ENCODE measurements at regions of chr2 and their contacts with region 1.

Region 1: DNA sequence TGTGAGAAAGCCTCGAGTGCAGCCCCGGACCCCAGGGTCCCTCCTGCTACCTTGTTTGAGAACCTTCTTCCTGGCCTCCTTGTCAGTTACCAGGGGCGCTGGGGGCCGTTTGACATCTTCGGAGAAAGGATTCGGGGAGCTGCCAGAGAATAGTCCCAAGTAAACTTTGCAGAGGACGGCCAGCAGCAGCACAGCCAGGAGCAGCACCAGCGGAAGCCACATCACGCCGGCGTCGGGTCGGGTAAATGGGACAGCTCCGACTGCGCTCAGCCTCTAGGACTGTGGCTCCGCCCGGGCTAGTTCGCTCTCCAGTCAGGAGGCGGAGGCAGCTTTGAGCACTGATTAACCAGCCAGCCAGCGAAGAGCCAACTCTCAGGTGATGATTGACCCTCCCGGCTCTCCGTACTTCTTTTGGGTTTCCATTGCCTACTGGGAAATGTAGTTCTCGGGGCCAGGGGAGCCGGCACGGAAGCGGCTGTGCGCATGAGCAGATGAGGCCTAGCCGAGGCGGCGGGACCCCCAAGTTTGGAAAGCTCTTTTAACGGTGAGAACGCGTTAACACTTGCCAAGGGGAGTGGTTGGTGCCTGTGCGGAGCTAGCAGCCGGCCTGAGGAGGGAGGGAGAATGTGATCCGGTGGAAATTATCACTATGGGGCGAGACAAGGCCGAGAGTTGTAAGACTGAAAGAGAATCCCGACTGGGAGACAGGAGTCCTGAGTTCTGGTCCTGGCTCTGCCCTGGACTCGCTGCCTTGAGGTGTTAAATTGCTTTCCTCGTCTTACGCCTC is at the starts of genes ELMOD3 and RETSAT:
- DNase-seq: peak; percentile 92 to 96
- H3K4me3 ChIP-seq: peak within 1 kb of the TSS; percentile 75 to 96 (median 90)
- H3K27ac ChIP-seq: no peak within 1 kb of the TSS
- H3K4me1 ChIP-seq: peaks cover 0 to 3% (median 1%) of the 10 kb centered on the region in 4 experiments; a peak in 2 of 7 replicates
- H3K27me3 ChIP-seq: no peaks in the 10 kb centered on the region
- CTCF ChIP-seq: no peak
- EP300 ChIP-seq: no peak
- POLR2A ChIP-seq: peak in 1 of 2 experiments; percentile 93; a peak in 2 of 3 replicates
- RAD21 ChIP-seq: no peak
- total RNA-seq, gene ELMOD3: 6.9 and 10.2 TPM in 2 replicates
- total RNA-seq, gene RETSAT: 13.6 and 15.8 TPM in 2 replicates

Region 2: GRCh38 chr2:85327822-85328617 is 26.5 kb before region 1 on chr2 and contains the start of gene TGOLN2:
- CTCF ChIA-PET with region 1: interaction called, 5 read pairs
- POLR2A ChIA-PET with region 1: interaction called, 11 read pairs
- DNase-seq: peak; percentile 58 to 94
- H3K4me3 ChIP-seq: peak within 1 kb of the TSS; percentile 61 to 96 (median 84)
- H3K27ac ChIP-seq: peak within 1 kb of the TSS; percentile 99
- H3K4me1 ChIP-seq: peaks cover 0 to 13% (median 7%) of the 10 kb centered on the region in 4 experiments; a peak in 6 of 7 replicates
- H3K27me3 ChIP-seq: no peaks in the 10 kb centered on the region; a peak in 1 of 7 replicates
- CTCF ChIP-seq: peak in 1 of 3 experiments; percentile 8; a peak in 2 of 4 replicates
- EP300 ChIP-seq: no peak
- POLR2A ChIP-seq: peak; percentile 99 to 100
- RAD21 ChIP-seq: no peak; a peak in 1 of 4 replicates
- total RNA-seq, gene TGOLN2: 36.3 and 38.9 TPM in 2 replicates

Region 3: GRCh38 chr2:85340034-85340892 is 14.2 kb before region 1 on chr2:
- CTCF ChIA-PET with region 1: interaction called, 4 read pairs
- POLR2A ChIA-PET with region 1: interaction called, 23 read pairs
- DNase-seq: no peak
- H3K4me3 ChIP-seq: no peak overlapping the region
- H3K27ac ChIP-seq: no peak overlapping the region
- H3K4me1 ChIP-seq: peaks cover 0 to 7% (median 1%) of the 10 kb centered on the region in 4 experiments; a peak in 3 of 7 replicates
- H3K27me3 ChIP-seq: no peaks in the 10 kb centered on the region
- CTCF ChIP-seq: no peak
- EP300 ChIP-seq: no peak
- POLR2A ChIP-seq: no peak
- RAD21 ChIP-seq: no peak

Region 4: DNA sequence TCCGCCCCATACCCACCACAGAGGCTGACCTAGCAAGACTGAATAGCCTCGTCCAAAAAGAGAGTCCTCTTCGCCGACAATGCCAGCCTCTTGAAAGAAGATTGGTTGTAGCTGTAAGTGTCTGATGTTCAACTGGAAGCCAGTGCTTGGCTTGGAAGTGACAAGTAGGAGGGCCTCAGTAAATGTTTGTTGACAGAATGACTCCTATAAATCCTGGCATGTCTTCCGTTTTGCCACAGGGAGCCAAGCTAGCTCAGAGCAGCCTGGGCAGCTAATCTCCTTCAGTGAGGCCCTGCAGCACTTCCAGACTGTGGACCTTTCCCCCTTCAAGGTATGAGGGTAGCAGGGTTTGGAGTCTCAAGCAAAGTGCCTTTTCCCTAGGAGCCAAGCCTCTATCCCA is 15.0 kb after region 1 on chr2:
- CTCF ChIA-PET with region 1: interaction called, 11 read pairs
- POLR2A ChIA-PET with region 1: interaction called, 12 read pairs
- DNase-seq: no peak
- H3K4me3 ChIP-seq: no peak overlapping the region
- H3K27ac ChIP-seq: no peak overlapping the region
- H3K4me1 ChIP-seq: no peaks in the 10 kb centered on the region
- H3K27me3 ChIP-seq: no peaks in the 10 kb centered on the region
- CTCF ChIP-seq: no peak
- EP300 ChIP-seq: no peak
- POLR2A ChIP-seq: no peak
- RAD21 ChIP-seq: no peak